Posterior cingulate gyrus (tissue), 11 donors: ENCODE measurements at regions of chr13 and their contacts with region 1.

Region 1: DNA sequence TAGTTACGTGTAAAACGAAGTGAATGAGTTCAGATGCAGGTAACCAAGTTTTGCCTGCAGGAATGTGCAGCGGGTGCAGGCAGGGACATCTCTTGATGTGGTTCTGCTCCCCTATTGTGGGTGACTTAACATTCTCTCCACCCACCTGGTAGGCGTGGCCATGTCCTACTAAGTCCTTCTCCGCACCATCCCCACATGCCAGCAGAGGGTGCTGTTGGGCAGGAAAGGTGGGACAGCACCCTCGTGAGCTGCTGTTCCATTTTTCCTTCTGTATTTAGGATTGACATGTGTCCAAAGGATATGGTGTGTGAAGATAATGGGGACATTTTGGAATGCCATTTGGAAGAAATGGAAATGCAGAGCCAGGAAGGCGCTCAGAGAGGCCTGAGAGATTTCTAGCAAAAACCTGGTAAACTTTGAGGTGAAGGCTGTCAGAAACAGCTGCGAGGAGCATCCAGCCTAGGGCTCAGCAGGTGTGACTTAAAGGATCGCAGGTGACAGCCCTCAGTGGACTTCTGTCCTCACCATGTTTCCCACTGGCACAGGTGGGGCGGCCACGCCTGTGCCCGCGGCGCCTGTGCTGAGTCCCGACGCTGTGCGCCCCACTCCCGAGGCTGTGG is 26.2 kb upstream of the MCF2L start:
- DNase-seq: peak; percentile 90 to 99 (median 98)

Region 2: GRCh38 chr13:113029487-113030258 is 86.9 kb after region 1 on chr13:
- intact Hi-C with region 1: loop called (anchors 2 kb)
- DNase-seq: peak in 7 of 10 donors; percentile 59 to 94 (median 74)

Region 3: GRCh38 chr13:113393563-113394338 is 451.0 kb after region 1 on chr13:
- intact Hi-C with region 1: loop called (anchors 10 kb)
- DNase-seq: peak; percentile 55 to 97 (median 77)